ENCODE measurements at regions of chr12 and their contacts with region 1.

Region 1: DNA sequence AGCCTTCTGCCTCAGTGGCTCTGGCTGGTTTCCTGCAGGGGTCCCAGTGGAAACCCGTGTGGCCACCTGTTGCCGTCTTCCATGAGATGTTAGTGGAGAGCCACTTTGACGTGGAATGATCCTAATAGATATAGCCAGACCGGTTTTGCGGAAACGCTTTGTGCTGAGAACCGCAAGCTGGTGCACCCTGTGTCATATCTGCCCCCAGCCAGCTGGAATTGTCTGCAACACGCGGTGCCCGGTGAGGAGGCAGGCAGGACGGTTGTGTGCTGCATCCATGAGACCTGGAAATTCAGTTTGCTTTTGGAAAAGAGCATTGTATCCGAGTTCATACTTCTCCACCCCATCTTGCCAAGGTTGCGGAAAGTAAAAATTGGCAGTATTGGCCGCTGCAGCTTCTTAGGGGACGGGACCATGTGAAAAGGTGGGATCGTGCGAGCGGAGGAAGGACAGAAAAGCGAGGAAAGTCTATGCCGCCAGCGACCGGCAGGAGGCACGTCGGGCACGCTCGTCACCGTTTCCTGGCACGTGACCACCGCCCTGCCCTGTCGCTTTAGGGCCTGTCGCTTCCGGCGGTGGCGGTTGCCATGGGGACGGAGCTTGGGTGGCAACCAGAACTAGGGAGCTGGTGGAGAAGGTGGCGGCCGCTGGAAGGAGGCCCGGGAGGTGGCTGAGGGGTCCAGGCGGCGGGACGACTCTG is at the start of gene CFAP251:
- DNase-seq: peak; percentile 98
- H3K4me3 Mint-ChIP-seq: peak within 1 kb of the TSS; percentile 69
- H3K27ac Mint-ChIP-seq: peak within 1 kb of the TSS; percentile 78
- H3K4me1 Mint-ChIP-seq: peaks cover 16% of the 10 kb centered on the region
- H3K27me3 Mint-ChIP-seq: no peaks in the 10 kb centered on the region
- total RNA-seq, gene CFAP251: 0.20 to 0.62 TPM

Region 2: DNA sequence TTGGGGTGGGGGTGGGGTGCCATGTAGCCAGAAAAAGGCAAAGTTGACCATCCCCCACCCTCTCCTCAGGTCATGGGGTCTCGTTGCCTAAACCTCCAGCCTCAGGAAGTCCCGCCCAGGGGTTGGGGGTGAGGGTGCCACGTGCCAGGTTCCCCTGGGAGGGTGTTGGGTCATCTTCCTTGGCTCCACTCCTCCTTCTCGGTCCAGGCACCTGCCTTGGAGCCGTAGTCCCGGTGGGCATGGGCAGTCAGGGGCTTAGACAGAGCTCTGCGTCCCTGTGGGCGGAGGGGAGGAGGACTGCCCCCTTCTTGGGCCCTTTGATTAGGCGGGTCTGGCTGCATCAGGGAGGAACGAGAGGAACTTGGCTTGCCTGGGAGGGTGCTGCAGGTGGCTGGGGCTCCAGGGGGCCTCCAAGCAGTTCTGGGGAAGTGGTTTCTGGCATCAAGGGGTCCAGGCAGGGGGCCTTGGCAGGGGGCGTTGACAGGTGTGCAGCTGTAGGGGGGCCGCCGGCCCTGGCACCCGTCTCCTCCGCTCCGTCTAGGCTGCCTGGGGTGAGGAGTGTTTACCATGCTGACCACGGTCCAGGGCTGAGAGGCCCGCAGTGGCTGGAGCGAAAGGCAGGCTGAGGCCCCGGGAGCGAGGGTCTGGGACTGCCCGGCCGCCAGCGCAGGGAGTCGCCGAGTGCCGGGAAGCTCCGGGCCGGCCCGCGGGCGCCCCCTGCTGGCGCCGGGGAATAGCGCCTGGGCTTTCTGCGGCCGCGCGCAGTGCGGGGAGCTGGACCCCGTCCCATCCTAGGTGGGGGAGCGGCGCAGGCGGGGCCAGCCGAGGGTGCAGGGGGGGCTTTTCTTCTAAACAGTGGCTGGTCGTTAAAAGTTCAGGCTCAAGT is 106.5 kb before region 1 on chr12:
- CTCF ChIA-PET with region 1: no interaction called
- intact Hi-C with region 1: no loop called
- DNase-seq: peak; percentile 67
- H3K4me3 Mint-ChIP-seq: peak overlapping the region; percentile 78
- H3K27ac Mint-ChIP-seq: peak overlapping the region; percentile 86
- H3K4me1 Mint-ChIP-seq: peaks cover 52% of the 10 kb centered on the region
- H3K27me3 Mint-ChIP-seq: no peaks in the 10 kb centered on the region

Region 3: GRCh38 chr12:121992059-121992879 is 74.1 kb after region 1 on chr12:
- CTCF ChIA-PET with region 1: interaction called, 5 read pairs
- intact Hi-C with region 1: loop called (anchors 2 kb)
- DNase-seq: peak; percentile 89
- H3K4me3 Mint-ChIP-seq: peak overlapping the region; percentile 43
- H3K27ac Mint-ChIP-seq: peak overlapping the region; percentile 87
- H3K4me1 Mint-ChIP-seq: peaks cover 20% of the 10 kb centered on the region
- H3K27me3 Mint-ChIP-seq: no peaks in the 10 kb centered on the region

Region 4: DNA sequence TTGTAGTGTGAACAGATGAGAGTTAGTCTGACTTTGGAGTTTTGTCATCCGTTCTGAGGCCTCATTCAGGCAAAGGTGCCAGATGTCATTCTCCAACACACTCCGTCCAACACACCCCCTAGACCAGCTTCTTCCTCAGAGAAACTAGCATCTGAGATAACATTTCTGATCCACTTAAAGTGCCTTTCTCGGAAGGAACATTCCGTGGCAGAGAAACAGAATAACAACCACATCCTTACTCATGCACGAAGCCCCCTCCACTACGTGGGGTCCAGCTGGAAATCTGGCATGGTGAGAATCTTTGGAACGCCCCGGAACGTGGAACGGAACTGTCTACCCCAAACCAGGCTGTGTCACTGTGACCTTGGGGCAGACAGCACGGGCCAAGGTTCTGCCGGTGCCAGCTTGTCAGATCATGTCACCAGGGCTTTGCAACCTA is 86.5 kb after region 1 on chr12:
- CTCF ChIA-PET with region 1: no interaction called
- intact Hi-C with region 1: loop called (anchors 5 kb)
- DNase-seq: no peak
- H3K4me3 Mint-ChIP-seq: no peak overlapping the region
- H3K27ac Mint-ChIP-seq: no peak overlapping the region
- H3K4me1 Mint-ChIP-seq: peaks cover 15% of the 10 kb centered on the region
- H3K27me3 Mint-ChIP-seq: peaks cover 2% of the 10 kb centered on the region

Region 5: GRCh38 chr12:122356192-122356635 is 438.1 kb after region 1 on chr12:
- CTCF ChIA-PET with region 1: no interaction called
- intact Hi-C with region 1: no loop called
- DNase-seq: peak; percentile 77
- H3K4me3 Mint-ChIP-seq: no peak overlapping the region
- H3K27ac Mint-ChIP-seq: no peak overlapping the region
- H3K4me1 Mint-ChIP-seq: peaks cover 6% of the 10 kb centered on the region
- H3K27me3 Mint-ChIP-seq: no peaks in the 10 kb centered on the region

Measured in activated naive CD4-positive, alpha-beta T cell treated with anti-CD3 and anti-CD28 coated beads for 36 hours (primary cell).